ENCODE measurements at regions of chr5 and their contacts with region 1.

Region 1: GRCh38 chr5:138668376-138669079 is 84.7 kb upstream of the CTNNA1 start:
- DNase-seq: no peak
- H3K4me3 ChIP-seq: no peak overlapping the region
- H3K27ac ChIP-seq: peak overlapping the region; percentile 83
- H3K4me1 ChIP-seq: peaks cover 43% of the 10 kb centered on the region
- H3K27me3 ChIP-seq: no peaks in the 10 kb centered on the region
- CTCF ChIP-seq: no peak

Region 2: DNA sequence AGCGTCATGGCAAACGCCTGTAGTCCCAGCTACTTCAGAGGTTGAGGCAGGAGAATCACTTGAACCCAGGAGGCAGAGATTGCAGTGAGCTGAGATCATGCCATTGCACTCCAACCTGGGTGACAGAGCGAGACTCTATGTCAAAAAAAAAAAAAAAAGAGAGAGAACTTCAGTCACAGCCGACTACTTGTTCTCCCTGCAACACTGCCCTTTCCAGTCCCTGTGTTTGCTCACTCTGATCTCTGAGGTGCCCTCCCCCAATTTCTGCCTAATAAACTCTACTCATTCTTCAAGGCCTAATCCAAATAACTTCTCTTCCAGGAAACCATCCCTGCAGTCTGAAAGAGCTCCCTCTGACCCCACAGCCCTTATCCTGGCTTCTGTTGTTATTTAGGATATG is 422.2 kb before region 1 on chr5:
- CTCF ChIA-PET with region 1: interaction called, 15 read pairs
- POLR2A ChIA-PET with region 1: no interaction called
- intact Hi-C with region 1: no loop called
- DNase-seq: no peak
- H3K4me3 ChIP-seq: no peak overlapping the region
- H3K27ac ChIP-seq: no peak overlapping the region
- H3K4me1 ChIP-seq: no peaks in the 10 kb centered on the region
- H3K27me3 ChIP-seq: peaks cover 25% of the 10 kb centered on the region
- CTCF ChIP-seq: no peak

Region 3: GRCh38 chr5:138465288-138466057 is 203.1 kb before region 1 on chr5 and contains the start of gene EGR1:
- CTCF ChIA-PET with region 1: no interaction called
- POLR2A ChIA-PET with region 1: no interaction called
- intact Hi-C with region 1: no loop called
- DNase-seq: peak; percentile 83 to 95
- H3K4me3 ChIP-seq: peak within 1 kb of the TSS; percentile 80
- H3K27ac ChIP-seq: peak within 1 kb of the TSS; percentile 81
- H3K4me1 ChIP-seq: peaks cover 6% of the 10 kb centered on the region
- H3K27me3 ChIP-seq: no peaks in the 10 kb centered on the region
- CTCF ChIP-seq: no peak
- total RNA-seq, gene EGR1: 24.7 and 31.0 TPM in 2 replicates

Region 4: DNA sequence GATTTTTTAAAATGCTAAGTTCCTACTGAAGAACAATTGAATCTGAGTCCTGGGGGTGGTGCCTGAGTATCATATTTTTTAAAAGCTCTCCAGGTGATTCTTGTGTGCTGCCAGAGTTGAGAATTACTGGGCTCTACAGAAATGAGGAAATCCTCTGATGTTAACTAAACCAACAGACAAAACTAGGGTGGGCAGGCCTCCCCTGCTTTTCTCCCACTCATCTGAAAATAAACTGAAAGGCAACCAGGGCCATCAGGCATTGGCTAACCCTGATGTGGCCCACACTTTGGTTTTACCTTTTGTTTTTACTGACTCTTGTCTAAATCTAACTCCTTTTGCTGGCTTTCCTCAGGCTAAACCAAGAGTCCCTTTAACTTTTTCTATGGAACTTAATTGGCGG is 71.4 kb after region 1 on chr5:
- CTCF ChIA-PET with region 1: no interaction called
- POLR2A ChIA-PET with region 1: no interaction called
- intact Hi-C with region 1: no loop called
- DNase-seq: no peak
- H3K4me3 ChIP-seq: no peak overlapping the region
- H3K27ac ChIP-seq: no peak overlapping the region
- H3K4me1 ChIP-seq: peaks cover 19% of the 10 kb centered on the region
- H3K27me3 ChIP-seq: no peaks in the 10 kb centered on the region
- CTCF ChIP-seq: no peak